Endothelial cell of umbilical vein (primary cell): ENCODE measurements at regions of chr18 and their contacts with region 1.

Region 1: DNA sequence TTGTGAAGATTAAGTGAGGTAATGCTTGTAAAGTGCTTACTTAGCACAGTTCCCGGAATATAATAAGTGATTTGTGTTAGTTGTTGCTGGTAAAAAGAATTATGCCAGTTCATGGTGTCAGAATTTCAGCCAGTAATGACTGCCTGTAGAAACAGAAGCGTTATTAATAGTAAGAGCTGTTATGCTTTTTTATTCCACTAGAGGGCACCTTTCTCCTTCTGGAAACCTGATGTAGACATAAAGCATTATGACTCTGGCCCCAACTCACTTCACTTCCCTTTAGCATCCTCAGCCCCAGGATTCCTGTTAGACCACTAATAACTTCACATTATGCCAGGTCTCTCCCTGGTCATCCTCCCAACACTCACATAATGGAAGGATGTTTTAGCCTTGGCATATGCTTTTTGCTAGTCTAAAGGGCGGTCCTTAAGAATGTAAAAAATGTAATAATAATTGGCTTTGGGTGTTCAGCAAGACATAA is 34.9 kb downstream of the C18orf54 start:
- DNase-seq: peak; percentile 71
- H3K4me3 ChIP-seq: no peak overlapping the region
- H3K27ac ChIP-seq: no peak overlapping the region
- H3K4me1 ChIP-seq: peaks cover 28% of the 10 kb centered on the region
- H3K27me3 ChIP-seq: no peaks in the 10 kb centered on the region
- CTCF ChIP-seq: peak; percentile 55 to 56
- POLR2A ChIP-seq: no peak

Region 2: GRCh38 chr18:54224379-54225014 is 168.1 kb before region 1 on chr18 and contains the start of gene MBD2:
- CTCF ChIA-PET with region 1: interaction called, 5 read pairs
- POLR2A ChIA-PET with region 1: no interaction called
- dilution Hi-C with region 1: no loop called
- intact Hi-C with region 1: loop called (anchors 2 kb)
- DNase-seq: peak; percentile 98
- H3K4me3 ChIP-seq: peak within 1 kb of the TSS; percentile 63 to 79 (median 73)
- H3K27ac ChIP-seq: peak within 1 kb of the TSS; percentile 82
- H3K4me1 ChIP-seq: peaks cover 23% of the 10 kb centered on the region
- H3K27me3 ChIP-seq: no peaks in the 10 kb centered on the region
- CTCF ChIP-seq: peak in 1 of 2 donors; percentile 16
- POLR2A ChIP-seq: peak; percentile 55
- total RNA-seq, gene MBD2: 105 and 110 TPM in 2 replicates

Region 3: GRCh38 chr18:54357660-54358494 is 34.7 kb before region 1 on chr18 and contains the starts of genes C18orf54 and STARD6:
- CTCF ChIA-PET with region 1: interaction called, 32 read pairs
- POLR2A ChIA-PET with region 1: no interaction called
- dilution Hi-C with region 1: no loop called
- intact Hi-C with region 1: loop called (anchors 1 kb)
- DNase-seq: peak; percentile 92
- H3K4me3 ChIP-seq: peak within 1 kb of the TSS; percentile 64 to 98 (median 79)
- H3K27ac ChIP-seq: peak within 1 kb of the TSS; percentile 51
- H3K4me1 ChIP-seq: peaks cover 11% of the 10 kb centered on the region
- H3K27me3 ChIP-seq: no peaks in the 10 kb centered on the region
- CTCF ChIP-seq: peak; percentile 22 to 23
- POLR2A ChIP-seq: peak; percentile 86
- total RNA-seq, gene C18orf54: 20.8 and 21.4 TPM in 2 replicates
- total RNA-seq, gene STARD6: not detected in 2 replicates

Region 4: GRCh38 chr18:54558609-54559585 is 166.3 kb after region 1 on chr18:
- CTCF ChIA-PET with region 1: interaction called, 4 read pairs
- POLR2A ChIA-PET with region 1: no interaction called
- dilution Hi-C with region 1: no loop called
- intact Hi-C with region 1: loop called (anchors 5 kb)
- DNase-seq: peak; percentile 25
- H3K4me3 ChIP-seq: no peak overlapping the region
- H3K27ac ChIP-seq: no peak overlapping the region
- H3K4me1 ChIP-seq: no peaks in the 10 kb centered on the region
- H3K27me3 ChIP-seq: no peaks in the 10 kb centered on the region
- CTCF ChIP-seq: peak; percentile 31 to 60
- POLR2A ChIP-seq: no peak

Region 5: GRCh38 chr18:54647176-54647575 is 254.6 kb after region 1 on chr18:
- CTCF ChIA-PET with region 1: interaction called, 4 read pairs
- POLR2A ChIA-PET with region 1: no interaction called
- dilution Hi-C with region 1: no loop called
- intact Hi-C with region 1: loop called (anchors 1 kb)
- DNase-seq: peak; percentile 19
- H3K4me3 ChIP-seq: no peak overlapping the region
- H3K27ac ChIP-seq: no peak overlapping the region
- H3K4me1 ChIP-seq: no peaks in the 10 kb centered on the region
- H3K27me3 ChIP-seq: peaks cover 5 to 6% of the 10 kb centered on the region in 2 experiments
- CTCF ChIP-seq: peak in 1 of 2 donors; percentile 7
- POLR2A ChIP-seq: no peak

Region 6: GRCh38 chr18:54671291-54671881 is 278.8 kb after region 1 on chr18:
- CTCF ChIA-PET with region 1: interaction called, 19 read pairs
- POLR2A ChIA-PET with region 1: no interaction called
- dilution Hi-C with region 1: no loop called
- intact Hi-C with region 1: loop called (anchors 1 kb)
- DNase-seq: peak; percentile 46
- H3K4me3 ChIP-seq: no peak overlapping the region
- H3K27ac ChIP-seq: no peak overlapping the region
- H3K4me1 ChIP-seq: no peaks in the 10 kb centered on the region
- H3K27me3 ChIP-seq: no peaks in the 10 kb centered on the region
- CTCF ChIP-seq: peak; percentile 20 to 33
- POLR2A ChIP-seq: no peak

Region 7: GRCh38 chr18:54983041-54983686 is 590.6 kb after region 1 on chr18:
- CTCF ChIA-PET with region 1: interaction called, 4 read pairs
- POLR2A ChIA-PET with region 1: no interaction called
- dilution Hi-C with region 1: no loop called
- intact Hi-C with region 1: loop called (anchors 1 kb)
- DNase-seq: peak; percentile 59
- H3K4me3 ChIP-seq: no peak overlapping the region
- H3K27ac ChIP-seq: no peak overlapping the region
- H3K4me1 ChIP-seq: no peaks in the 10 kb centered on the region
- H3K27me3 ChIP-seq: no peaks in the 10 kb centered on the region
- CTCF ChIP-seq: peak; percentile 33 to 41
- POLR2A ChIP-seq: no peak